HAP-1 (cell line): ENCODE measurements at regions of chr11 and their contacts with region 1.

Region 1: GRCh38 chr11:122853971-122854446 is 15.7 kb downstream of the CRTAM start:
- DNase-seq: peak; percentile 71 to 85
- H3K4me3 ChIP-seq: no peak overlapping the region
- H3K4me1 ChIP-seq: no peaks in the 10 kb centered on the region
- H3K27me3 ChIP-seq: no peaks in the 10 kb centered on the region

Region 2: DNA sequence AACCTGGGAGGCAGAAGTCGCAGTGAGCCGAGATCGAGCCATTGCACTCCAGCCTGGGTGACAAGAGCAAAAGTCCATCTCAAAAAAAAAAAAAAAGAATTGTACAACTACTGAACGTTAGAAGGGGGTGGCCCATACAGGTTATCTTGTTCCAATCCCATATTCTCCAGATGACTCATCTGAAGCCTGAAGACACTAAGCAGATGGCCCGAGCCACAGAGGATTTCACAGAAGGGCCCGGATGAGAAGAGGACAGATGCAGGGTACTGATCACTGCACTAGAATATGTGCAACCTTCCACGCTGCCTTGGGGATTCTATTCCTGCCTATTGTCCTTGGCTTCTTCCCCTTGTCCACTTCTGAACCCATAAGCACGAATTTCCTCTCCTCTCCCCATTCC is 269.3 kb before region 1 on chr11:
- in situ Hi-C with region 1: loop called (anchors 10 kb)
- DNase-seq: no peak
- H3K4me3 ChIP-seq: no peak overlapping the region
- H3K4me1 ChIP-seq: no peaks in the 10 kb centered on the region
- H3K27me3 ChIP-seq: no peaks in the 10 kb centered on the region

Region 3: GRCh38 chr11:122668562-122669090 is 185.4 kb before region 1 on chr11:
- in situ Hi-C with region 1: no loop called
- DNase-seq: no peak
- H3K4me3 ChIP-seq: no peak overlapping the region
- H3K4me1 ChIP-seq: no peaks in the 10 kb centered on the region
- H3K27me3 ChIP-seq: no peaks in the 10 kb centered on the region

Region 4: DNA sequence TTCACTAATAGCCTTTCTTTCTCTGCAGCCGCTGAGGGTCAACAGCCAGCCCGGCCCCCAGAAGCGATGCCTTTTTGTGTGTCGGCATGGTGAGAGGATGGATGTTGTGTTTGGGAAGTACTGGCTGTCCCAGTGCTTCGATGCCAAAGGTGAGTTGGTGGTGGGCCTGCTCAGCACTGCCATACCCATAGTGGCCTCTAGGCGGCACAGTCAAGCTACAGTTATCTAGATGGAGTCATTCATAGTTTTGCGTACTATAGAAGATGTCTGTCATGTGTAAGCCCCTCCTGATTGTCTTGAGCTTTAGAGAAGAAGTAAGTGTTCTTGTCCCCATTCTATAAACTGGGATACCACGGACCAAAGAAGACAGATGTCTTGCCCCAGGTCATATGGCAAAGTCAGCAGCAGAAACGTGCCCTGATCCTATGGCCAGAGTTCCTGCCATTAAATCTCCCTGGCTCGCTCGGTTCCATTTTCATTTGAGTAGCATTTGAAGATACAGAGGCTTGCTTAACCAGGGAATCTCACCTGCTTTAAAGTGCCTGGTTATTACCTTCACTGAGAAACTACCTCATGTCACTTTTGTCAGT is 57.8 kb before region 1 on chr11:
- in situ Hi-C with region 1: loop called (anchors 5 kb)
- DNase-seq: peak; percentile 46 to 79
- H3K4me3 ChIP-seq: no peak overlapping the region
- H3K4me1 ChIP-seq: no peaks in the 10 kb centered on the region
- H3K27me3 ChIP-seq: no peaks in the 10 kb centered on the region